Natural killer cell (primary cell): ENCODE measurements at regions of chr1 and their contacts with region 1.

Region 1: DNA sequence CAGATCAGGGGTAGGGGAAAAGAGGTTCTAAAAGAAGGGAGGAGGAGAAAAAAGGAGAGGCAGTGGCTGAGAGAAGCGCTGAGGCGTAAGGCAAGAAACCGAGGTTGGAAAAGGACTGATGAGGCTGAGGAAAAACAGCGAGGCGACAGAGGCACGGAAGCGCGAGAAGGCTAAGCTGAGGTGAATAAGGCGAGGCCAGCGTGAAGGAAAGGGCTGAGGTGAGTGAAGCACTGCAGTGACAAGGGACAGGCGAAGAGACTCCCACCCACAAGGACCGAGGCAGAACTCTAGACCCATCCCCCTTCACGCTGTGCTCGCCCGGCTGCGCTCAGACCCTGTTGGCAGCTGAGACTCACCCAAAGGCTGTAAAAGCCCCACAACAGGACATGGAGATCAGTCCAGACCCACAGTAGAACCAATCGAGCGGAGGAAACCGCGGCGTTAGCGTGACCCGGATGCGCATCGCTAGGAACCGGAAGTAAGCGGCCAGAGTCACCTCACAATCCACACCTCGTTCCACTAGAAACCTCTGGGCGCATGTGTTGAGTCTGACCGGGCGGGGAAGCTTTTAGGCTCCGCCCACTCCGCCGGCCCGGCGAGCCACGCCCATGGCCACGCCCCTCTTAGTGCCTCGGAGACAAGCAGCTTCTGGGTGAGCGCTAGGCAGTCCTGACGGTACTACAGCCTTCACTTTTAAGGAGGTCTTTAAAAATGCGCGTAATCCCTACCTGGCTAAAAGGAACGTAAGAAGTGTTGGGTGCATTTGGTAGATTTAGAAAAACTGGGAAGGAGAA is at the start of gene EYA3:
- DNase-seq: peak; percentile 99 to 100
- ATAC-seq: peak; percentile 94 to 99 (median 94)
- H3K4me3 ChIP-seq: peak within 1 kb of the TSS; percentile 92
- H3K4me3 Mint-ChIP-seq: peak within 1 kb of the TSS; percentile 94
- H3K27ac ChIP-seq: peak within 1 kb of the TSS; percentile 84
- H3K27ac Mint-ChIP-seq: peak within 1 kb of the TSS; percentile 95 to 99
- H3K4me1 ChIP-seq: peaks cover 11% of the 10 kb centered on the region
- H3K4me1 Mint-ChIP-seq: peaks cover 48 to 50% of the 10 kb centered on the region in 2 donors
- H3K27me3 ChIP-seq: no peaks in the 10 kb centered on the region
- H3K27me3 Mint-ChIP-seq: no peaks in the 10 kb centered on the region
- CTCF ChIP-seq: no peak
- total RNA-seq, gene EYA3: 17.7 to 25.2 (median 19.1) TPM

Region 2: GRCh38 chr1:27858072-27858958 is 230.1 kb before region 1 on chr1:
- intact Hi-C with region 1: loop called (anchors 5 kb)
- DNase-seq: peak; percentile 85 to 90
- ATAC-seq: peak; percentile 97 to 100 (median 99)
- H3K4me3 ChIP-seq: no peak overlapping the region
- H3K4me3 Mint-ChIP-seq: no peak overlapping the region
- H3K27ac ChIP-seq: no peak overlapping the region
- H3K27ac Mint-ChIP-seq: peak overlapping the region in 1 of 2 donors; percentile 76
- H3K4me1 ChIP-seq: peaks cover 27% of the 10 kb centered on the region
- H3K4me1 Mint-ChIP-seq: peaks cover 6 to 23% of the 10 kb centered on the region in 2 donors
- H3K27me3 ChIP-seq: no peaks in the 10 kb centered on the region
- H3K27me3 Mint-ChIP-seq: no peaks in the 10 kb centered on the region
- CTCF ChIP-seq: peak; percentile 97

Region 3: DNA sequence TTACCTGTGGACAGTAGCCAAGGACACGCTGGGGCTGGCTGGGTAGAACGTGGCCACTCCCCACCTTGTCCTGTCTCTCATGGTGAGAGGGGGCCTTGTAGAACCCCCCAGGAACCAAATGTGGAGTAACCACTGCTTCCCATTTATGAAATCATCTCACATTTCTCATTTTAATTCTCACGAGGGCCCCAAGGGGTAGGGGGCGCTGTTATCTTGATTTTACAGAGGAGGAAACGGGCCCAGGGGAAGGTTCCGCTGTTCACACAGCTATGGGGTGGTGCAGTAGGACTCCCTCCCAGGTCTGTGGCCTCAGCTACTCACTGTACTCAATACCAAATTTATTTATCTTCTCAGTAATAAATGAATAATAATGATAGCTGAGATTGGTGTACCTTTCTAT is 148.1 kb before region 1 on chr1:
- intact Hi-C with region 1: loop called (anchors 5 kb)
- DNase-seq: peak; percentile 63 to 85
- ATAC-seq: peak; percentile 77 to 83 (median 81)
- H3K4me3 ChIP-seq: no peak overlapping the region
- H3K4me3 Mint-ChIP-seq: no peak overlapping the region
- H3K27ac ChIP-seq: peak overlapping the region; percentile 6
- H3K27ac Mint-ChIP-seq: peak overlapping the region; percentile 93
- H3K4me1 ChIP-seq: peaks cover 34% of the 10 kb centered on the region
- H3K4me1 Mint-ChIP-seq: peaks cover 24 to 35% of the 10 kb centered on the region in 2 donors
- H3K27me3 ChIP-seq: no peaks in the 10 kb centered on the region
- H3K27me3 Mint-ChIP-seq: peaks cover 4 to 8% of the 10 kb centered on the region in 2 donors
- CTCF ChIP-seq: peak; percentile 75

Region 4: DNA sequence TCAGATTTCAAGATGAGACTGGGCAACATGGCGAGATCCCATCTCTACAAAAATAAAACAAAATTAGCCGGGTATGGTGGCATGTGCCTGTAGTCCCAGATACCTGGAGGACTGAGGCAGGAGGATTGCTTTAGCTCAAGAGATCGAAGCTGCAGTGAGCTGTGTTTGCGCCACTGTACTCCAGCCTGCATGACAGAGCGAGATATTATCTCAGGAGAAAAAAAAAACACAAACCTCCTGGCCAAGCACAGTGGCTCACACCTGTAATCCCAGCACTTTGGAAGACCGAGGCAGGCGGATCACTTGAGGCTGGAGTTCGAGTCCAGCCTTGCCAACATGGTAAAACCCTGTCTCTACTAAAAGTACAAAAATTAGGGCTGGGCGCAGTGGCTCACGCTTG is 85.8 kb before region 1 on chr1:
- intact Hi-C with region 1: no loop called
- DNase-seq: no peak
- ATAC-seq: no peak
- H3K4me3 ChIP-seq: no peak overlapping the region
- H3K4me3 Mint-ChIP-seq: no peak overlapping the region
- H3K27ac ChIP-seq: no peak overlapping the region
- H3K27ac Mint-ChIP-seq: no peak overlapping the region
- H3K4me1 ChIP-seq: no peaks in the 10 kb centered on the region
- H3K4me1 Mint-ChIP-seq: no peaks in the 10 kb centered on the region
- H3K27me3 ChIP-seq: no peaks in the 10 kb centered on the region
- H3K27me3 Mint-ChIP-seq: no peaks in the 10 kb centered on the region
- CTCF ChIP-seq: no peak

Region 5: GRCh38 chr1:28199328-28200233 is 111.2 kb after region 1 on chr1:
- intact Hi-C with region 1: loop called (anchors 1 kb)
- DNase-seq: peak; percentile 77 to 84
- ATAC-seq: peak; percentile 76 to 89 (median 88)
- H3K4me3 ChIP-seq: no peak overlapping the region
- H3K4me3 Mint-ChIP-seq: peak overlapping the region; percentile 85
- H3K27ac ChIP-seq: peak overlapping the region; percentile 74
- H3K27ac Mint-ChIP-seq: peak overlapping the region; percentile 80 to 88
- H3K4me1 ChIP-seq: peaks cover 68% of the 10 kb centered on the region
- H3K4me1 Mint-ChIP-seq: peaks cover 54 to 67% of the 10 kb centered on the region in 2 donors
- H3K27me3 ChIP-seq: no peaks in the 10 kb centered on the region
- H3K27me3 Mint-ChIP-seq: no peaks in the 10 kb centered on the region
- CTCF ChIP-seq: no peak

Region 6: GRCh38 chr1:28208818-28209441 is 120.6 kb after region 1 on chr1:
- intact Hi-C with region 1: loop called (anchors 1 kb)
- DNase-seq: peak; percentile 45 to 80
- ATAC-seq: peak; percentile 86 to 98 (median 92)
- H3K4me3 ChIP-seq: no peak overlapping the region
- H3K4me3 Mint-ChIP-seq: no peak overlapping the region
- H3K27ac ChIP-seq: no peak overlapping the region
- H3K27ac Mint-ChIP-seq: peak overlapping the region; percentile 24 to 36
- H3K4me1 ChIP-seq: no peaks in the 10 kb centered on the region
- H3K4me1 Mint-ChIP-seq: peaks cover 10 to 13% of the 10 kb centered on the region in 2 donors
- H3K27me3 ChIP-seq: no peaks in the 10 kb centered on the region
- H3K27me3 Mint-ChIP-seq: no peaks in the 10 kb centered on the region
- CTCF ChIP-seq: peak; percentile 78

Region 7: DNA sequence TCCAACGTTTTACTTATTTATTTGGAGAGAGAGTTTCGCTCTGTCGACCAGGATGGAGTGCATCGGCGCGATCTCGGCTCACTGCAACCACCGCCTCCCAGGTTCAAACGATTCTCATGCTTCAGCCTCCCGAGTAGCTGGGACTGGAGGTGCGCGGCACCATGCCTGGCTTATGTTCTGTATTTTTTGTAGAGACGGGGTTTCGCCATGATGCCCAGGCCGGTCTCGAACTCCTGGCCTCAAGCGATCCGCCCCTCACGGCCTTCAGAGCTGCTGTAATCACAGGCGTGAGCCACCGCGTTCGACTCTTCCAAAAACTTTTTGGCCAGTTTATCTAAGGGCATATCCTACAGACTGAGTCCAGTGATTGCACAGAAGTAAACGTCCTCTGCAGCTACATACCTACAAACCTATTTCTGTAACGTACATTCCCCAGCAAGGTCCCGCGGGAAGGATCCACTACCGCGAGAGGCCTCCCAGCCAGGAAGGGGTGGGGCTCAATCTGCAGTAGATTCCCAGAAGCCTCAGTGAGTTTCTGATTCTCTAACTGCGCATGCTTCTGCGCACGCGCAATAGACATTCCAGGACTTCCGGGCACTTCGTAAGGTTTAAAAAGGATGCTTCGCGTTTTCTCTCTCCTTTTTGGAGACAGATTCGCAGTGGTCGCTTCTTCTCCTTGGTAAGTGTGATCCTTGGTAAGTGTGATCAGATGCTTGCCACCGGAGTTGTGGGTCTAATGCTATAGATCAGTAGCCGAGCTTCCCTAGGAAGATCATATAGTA is 417.2 kb after region 1 on chr1 and contains the start of gene RCC1:
- intact Hi-C with region 1: loop called (anchors 5 kb)
- DNase-seq: peak; percentile 87 to 99
- ATAC-seq: peak; percentile 93 to 96 (median 95)
- H3K4me3 ChIP-seq: peak within 1 kb of the TSS; percentile 80
- H3K4me3 Mint-ChIP-seq: peak within 1 kb of the TSS; percentile 99
- H3K27ac ChIP-seq: peak within 1 kb of the TSS; percentile 77
- H3K27ac Mint-ChIP-seq: peak within 1 kb of the TSS; percentile 97 to 99
- H3K4me1 ChIP-seq: peaks cover 43% of the 10 kb centered on the region
- H3K4me1 Mint-ChIP-seq: peaks cover 47 to 50% of the 10 kb centered on the region in 2 donors
- H3K27me3 ChIP-seq: no peaks in the 10 kb centered on the region
- H3K27me3 Mint-ChIP-seq: no peaks in the 10 kb centered on the region
- CTCF ChIP-seq: no peak
- total RNA-seq, gene RCC1: 15.9 to 23.7 (median 19.2) TPM